ENCODE measurements at regions of chr9 and their contacts with region 1.

Region 1: GRCh38 chr9:124950050-124950718 is 9.3 kb upstream of the GOLGA1 start:
- DNase-seq: no peak
- ATAC-seq: no peak

Region 2: DNA sequence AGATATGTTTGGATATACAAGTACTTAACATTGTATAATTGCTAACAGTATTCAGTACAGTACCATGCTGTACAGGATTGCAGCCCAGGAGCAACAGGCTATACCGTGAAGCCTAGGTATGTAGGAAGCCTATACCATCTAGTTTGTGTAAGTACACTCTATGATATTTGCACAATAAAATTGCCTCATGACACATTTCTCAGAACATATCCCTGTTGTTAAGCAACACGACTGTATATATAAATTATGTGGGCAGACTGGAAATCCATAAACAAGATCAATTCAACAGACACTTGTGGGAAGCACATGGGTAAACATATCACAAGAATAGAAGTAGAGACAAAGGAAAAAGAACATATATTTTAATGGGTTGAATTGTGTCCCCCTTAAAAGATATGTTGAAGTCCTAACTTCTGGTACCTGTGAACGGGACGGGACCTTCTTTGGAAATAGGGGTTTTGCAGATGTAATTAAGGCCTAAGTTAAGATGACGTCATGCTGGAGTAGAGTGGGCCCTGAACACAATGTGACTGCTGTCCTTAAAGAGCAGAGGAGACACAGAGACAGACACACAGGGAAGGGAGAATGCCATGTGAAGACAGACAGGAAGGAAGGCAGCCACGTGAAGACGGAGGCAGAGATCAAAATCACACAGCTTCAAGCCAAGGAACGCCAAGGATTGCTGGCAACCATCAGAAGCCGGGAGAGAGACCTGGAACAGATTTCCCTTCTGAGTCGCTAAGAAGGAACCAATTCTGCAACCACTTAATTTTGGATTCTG is 116.8 kb after region 1 on chr9:
- intact Hi-C with region 1: no loop called
- DNase-seq: no peak
- ATAC-seq: peak; percentile 60

Region 3: GRCh38 chr9:126534431-126535186 is 1584.4 kb after region 1 on chr9:
- intact Hi-C with region 1: loop called (anchors 5 kb)
- DNase-seq: no peak
- ATAC-seq: no peak